ENCODE measurements at regions of chr3 and their contacts with region 1.

Region 1: DNA sequence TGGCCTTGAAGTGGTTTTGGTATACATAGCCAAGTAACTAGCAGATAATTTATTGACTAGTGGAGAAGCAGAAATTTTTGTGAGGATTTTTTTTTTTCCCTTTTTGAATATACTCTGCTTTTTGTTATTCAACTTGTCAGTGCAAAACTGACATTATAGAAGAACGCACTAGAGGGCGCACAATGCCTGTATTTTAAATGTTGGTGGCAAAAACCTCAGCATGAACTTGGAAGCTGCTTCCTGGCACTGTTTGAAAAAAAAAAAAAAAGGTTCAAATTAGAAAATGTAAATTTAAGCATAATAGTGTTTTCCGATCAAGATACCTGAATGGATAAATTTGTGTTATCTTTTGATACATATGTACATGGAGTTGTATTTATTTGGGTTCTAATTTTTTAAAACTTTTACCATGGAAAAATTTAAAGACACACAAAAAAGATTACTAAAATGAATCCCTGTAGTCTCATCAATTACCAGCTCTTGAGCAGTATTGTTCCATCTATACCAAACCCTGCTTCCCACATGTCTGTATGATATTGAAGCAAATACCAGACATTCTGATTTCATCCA is 56.0 kb downstream of the SLC25A26 start:
- DNase-seq: peak in 1 of 3 donors; percentile 87
- ATAC-seq: peak; percentile 70
- H3K4me3 ChIP-seq: no peak overlapping the region
- H3K4me1 ChIP-seq: no peaks in the 10 kb centered on the region
- CTCF ChIP-seq: peak; percentile 39

Region 2: DNA sequence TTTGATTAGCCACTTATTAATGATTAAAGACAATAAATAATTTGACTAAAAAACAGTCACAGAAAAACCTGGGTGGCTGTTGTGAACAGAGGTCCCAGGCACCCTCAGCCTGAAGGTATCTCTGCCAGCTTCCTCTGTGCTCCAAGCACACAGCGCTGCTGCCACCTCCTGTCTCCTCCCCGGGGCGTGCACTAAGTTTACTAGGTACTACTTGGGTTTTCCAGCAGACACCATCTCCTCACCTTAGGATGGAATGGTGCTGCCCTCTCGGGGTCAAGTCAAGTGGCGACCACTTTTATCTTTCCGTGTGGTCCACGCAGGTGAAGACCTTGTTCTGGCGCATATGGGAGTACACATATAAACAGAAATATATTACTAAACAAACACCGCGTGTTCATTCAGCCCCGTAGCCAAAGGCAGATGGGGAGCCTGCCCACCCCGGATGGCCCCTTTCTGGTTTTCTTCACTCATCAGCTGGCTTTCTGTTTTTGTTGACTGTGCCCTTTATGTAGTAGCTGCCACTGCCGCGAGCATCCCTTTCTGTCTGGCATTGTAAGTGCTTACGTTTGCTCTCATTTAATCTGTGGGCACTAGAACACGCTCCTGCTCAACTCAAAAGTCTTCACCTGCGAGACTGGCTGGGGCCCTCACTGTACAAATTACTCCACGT is 96.0 kb after region 1 on chr3:
- intact Hi-C with region 1: loop called in 1 of 2 experiments (anchors 10 kb)
- DNase-seq: peak in 2 of 3 donors; percentile 61 to 65
- ATAC-seq: peak; percentile 78
- H3K4me3 ChIP-seq: no peak overlapping the region
- H3K4me1 ChIP-seq: peaks cover 13% of the 10 kb centered on the region
- CTCF ChIP-seq: no peak

Region 3: DNA sequence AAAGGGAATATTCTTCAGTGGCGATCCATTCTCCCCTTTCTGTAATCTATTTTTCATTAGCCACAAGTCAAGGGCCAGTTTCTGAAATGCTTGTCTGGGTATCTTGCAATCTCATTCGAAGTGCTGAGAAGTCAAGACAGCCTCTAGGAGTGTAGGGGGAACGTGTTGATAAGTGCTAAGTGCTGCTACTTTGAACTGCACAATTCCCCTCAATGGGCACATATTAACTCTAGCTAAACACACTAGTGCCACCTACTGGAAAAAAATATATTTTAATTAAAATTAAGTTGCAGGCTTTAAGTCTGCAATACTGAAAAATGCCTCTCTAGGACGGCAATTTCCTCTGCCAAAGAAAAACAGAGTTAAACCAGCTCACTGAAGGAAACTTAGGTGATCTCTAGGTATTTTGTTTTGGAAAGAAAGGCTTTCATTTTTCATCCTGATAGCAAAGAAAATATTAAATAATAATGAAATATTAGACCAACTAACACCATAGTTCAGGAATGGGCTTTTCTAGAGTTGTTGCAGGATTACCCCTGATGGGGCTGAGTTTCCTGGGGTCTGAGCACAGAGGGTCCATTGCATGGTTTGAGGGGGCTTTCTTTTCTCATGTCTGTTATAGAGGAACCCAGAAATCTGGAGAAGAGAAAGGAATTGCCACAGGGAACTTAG is 539.4 kb after region 1 on chr3:
- intact Hi-C with region 1: loop called (anchors 5 kb)
- DNase-seq: no peak
- ATAC-seq: peak; percentile 83
- H3K4me3 ChIP-seq: no peak overlapping the region
- H3K4me1 ChIP-seq: no peaks in the 10 kb centered on the region
- CTCF ChIP-seq: no peak

Region 4: GRCh38 chr3:67113802-67114407 is 837.1 kb after region 1 on chr3:
- intact Hi-C with region 1: no loop called
- DNase-seq: peak; percentile 43 to 93 (median 78)
- ATAC-seq: peak; percentile 94
- H3K4me3 ChIP-seq: no peak overlapping the region
- H3K4me1 ChIP-seq: no peaks in the 10 kb centered on the region
- CTCF ChIP-seq: peak; percentile 67

Measured in mucosa of descending colon (tissue), 3 donors.